ENCODE measurements at regions of chr10 and their contacts with region 1.

Region 1: DNA sequence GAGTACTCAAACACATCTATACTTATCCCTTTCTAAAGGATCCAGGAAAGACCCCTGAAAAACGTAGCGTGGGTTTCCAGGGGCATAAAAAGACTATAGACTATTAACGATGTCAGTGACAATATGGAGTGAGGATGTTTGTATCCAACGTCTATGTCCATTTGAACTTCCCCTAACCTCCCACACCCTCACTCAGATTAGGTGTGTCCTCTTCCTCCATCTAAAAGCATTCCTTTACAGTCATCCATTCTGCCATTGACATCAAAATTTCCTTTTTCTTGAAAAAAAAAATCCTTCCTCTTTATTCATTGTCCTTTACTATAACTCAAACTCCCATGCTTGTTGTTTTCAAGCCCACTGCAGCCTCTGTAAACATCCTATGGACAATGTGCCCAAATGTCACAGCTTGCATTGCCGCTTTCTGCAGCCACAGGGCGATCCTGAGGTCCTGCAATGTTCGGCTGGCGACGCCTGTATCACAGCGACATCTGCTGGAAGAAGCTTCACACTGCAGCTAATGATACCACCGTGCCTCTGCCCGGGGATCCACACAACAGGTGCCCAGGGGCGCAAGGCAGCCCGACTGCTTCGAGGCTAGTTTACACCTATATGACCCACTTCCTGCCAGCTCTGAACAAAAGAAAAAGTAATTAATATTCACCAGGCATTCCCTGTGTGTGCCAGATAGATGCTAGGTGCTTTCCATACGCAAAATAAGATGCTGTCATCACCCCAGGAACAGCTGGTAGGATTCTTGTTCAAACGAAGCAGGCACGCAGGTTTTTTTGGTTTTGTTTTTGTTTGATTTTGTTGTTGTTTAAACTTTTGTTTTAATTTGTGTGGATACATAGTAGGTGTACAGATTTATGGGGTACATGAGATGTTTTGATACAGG is 267.9 kb upstream of the GHITM start:
- DNase-seq: peak; percentile 75 to 82 (median 80)
- ATAC-seq: peak; percentile 99
- H3K4me3 ChIP-seq: no peak overlapping the region
- H3K27ac ChIP-seq: no peak overlapping the region
- H3K4me1 ChIP-seq: no peaks in the 10 kb centered on the region
- H3K27me3 ChIP-seq: no peaks in the 10 kb centered on the region
- CTCF ChIP-seq: peak; percentile 93 to 98 (median 96)
- EP300 ChIP-seq: no peak
- POLR2A ChIP-seq: no peak
- RAD21 ChIP-seq: peak; percentile 85 to 94

Region 2: DNA sequence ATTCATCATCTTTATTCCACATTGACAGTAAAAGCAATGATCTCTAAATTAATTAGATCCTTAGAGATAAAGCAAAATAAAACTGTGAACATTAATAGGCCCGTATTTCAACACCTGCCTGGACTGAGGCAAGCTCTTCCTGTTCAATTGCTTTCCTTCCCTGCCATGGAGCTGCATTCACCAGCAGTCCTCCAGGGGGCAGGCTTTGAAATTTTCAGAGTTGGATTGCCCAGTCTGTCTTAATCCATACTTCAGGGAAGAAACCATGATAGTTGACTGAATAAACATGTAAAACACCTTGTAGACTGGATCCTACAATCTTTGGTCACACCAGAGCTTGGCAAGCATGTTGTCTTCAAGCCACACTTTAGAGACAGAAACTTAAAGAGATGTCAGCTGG is 1059.8 kb before region 1 on chr10:
- CTCF ChIA-PET with region 1: no interaction called
- POLR2A ChIA-PET with region 1: no interaction called
- in situ Hi-C with region 1: no loop called
- intact Hi-C with region 1: loop called (anchors 5 kb)
- DNase-seq: peak in 3 of 4 experiments; percentile 6 to 12 (median 12)
- ATAC-seq: no peak
- H3K4me3 ChIP-seq: no peak overlapping the region
- H3K27ac ChIP-seq: no peak overlapping the region
- H3K4me1 ChIP-seq: no peaks in the 10 kb centered on the region
- H3K27me3 ChIP-seq: no peaks in the 10 kb centered on the region
- CTCF ChIP-seq: peak; percentile 13 to 38 (median 14); a peak in 1 of 6 replicates
- EP300 ChIP-seq: no peak
- POLR2A ChIP-seq: no peak
- RAD21 ChIP-seq: no peak

Region 3: DNA sequence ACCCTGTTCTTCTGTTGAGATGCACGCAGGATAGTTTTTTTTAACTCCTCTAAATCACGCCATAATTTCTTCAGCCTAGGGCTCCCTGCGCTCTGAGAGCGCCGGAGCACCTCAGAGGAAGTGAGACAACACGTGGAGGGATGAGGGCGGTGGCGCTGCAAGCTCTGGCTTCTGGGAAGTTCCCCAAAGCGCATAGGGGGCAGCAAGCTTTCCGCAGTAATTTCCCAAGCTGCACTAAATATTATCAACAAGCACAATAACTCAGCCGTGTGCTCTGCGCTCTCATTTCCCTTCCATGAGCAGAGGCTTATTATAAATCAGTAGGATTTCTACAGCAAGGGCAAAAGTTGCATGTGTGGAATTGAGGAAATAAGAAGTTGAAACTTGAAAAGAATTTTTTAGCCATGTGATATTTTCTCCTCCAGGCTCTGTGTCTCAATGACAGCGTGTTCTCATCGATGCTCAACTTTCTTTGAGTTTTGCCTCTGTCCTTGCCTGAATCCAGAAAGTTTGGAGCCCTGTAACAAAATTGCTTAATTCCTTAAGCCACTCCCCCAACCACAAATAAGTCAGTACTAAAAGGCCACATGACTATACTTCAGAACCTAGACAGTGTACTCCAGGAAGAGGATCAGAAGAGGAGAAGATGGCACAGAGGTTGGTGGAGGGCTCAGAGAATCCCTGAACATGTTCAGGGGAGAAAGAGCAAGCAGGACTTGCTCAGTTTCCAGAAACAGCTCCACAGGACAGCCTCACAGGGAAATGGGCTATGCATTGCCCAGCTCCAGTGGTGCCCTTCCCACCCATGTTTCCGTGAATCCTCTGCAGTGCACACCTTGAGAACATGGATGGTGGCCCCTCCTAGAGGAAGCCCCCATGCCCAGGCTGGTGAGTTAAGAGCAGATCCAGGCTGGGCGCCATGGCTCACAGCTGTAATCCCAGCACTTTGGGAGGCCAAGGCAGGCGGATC is 46.4 kb after region 1 on chr10:
- CTCF ChIA-PET with region 1: no interaction called
- POLR2A ChIA-PET with region 1: no interaction called
- in situ Hi-C with region 1: no loop called
- intact Hi-C with region 1: loop called (anchors 5 kb)
- DNase-seq: peak in 2 of 4 experiments; percentile 26 to 39
- ATAC-seq: peak; percentile 92
- H3K4me3 ChIP-seq: no peak overlapping the region
- H3K27ac ChIP-seq: no peak overlapping the region
- H3K4me1 ChIP-seq: 0 out of 5 replicates have a peak, but pooled peaks cover 0 to 4% of the 10 kb centered on the region in 2 experiments
- H3K27me3 ChIP-seq: peaks cover 0 to 5% of the 10 kb centered on the region in 2 experiments; a peak in 1 of 5 replicates
- CTCF ChIP-seq: peak; percentile 53 to 66 (median 53)
- EP300 ChIP-seq: no peak
- POLR2A ChIP-seq: no peak
- RAD21 ChIP-seq: peak; percentile 24 to 53

Region 4: GRCh38 chr10:84097787-84098353 is 226.4 kb after region 1 on chr10:
- CTCF ChIA-PET with region 1: interaction called, 3 read pairs
- POLR2A ChIA-PET with region 1: no interaction called
- in situ Hi-C with region 1: no loop called
- intact Hi-C with region 1: loop called (anchors 5 kb)
- DNase-seq: peak in 1 of 4 experiments; percentile 23
- ATAC-seq: peak; percentile 50; the same call in 1 of the 3 replicates
- H3K4me3 ChIP-seq: no peak overlapping the region
- H3K27ac ChIP-seq: no peak overlapping the region
- H3K4me1 ChIP-seq: no peaks in the 10 kb centered on the region
- H3K27me3 ChIP-seq: peaks cover 0 to 5% of the 10 kb centered on the region in 2 experiments; a peak in 1 of 5 replicates
- CTCF ChIP-seq: peak; percentile 35 to 74 (median 54); a peak in 5 of 6 replicates
- EP300 ChIP-seq: no peak
- POLR2A ChIP-seq: no peak
- RAD21 ChIP-seq: peak; percentile 46 to 69

Measured in K562 (cell line).